MCF 10A (cell line): ENCODE measurements at regions of chr19 and their contacts with region 1.

Region 1: GRCh38 chr19:15379083-15379995 is at the start of gene AKAP8:
- DNase-seq: peak; percentile 99
- H3K4me3 Mint-ChIP-seq: peak within 1 kb of the TSS; percentile 97
- H3K27ac Mint-ChIP-seq: peak within 1 kb of the TSS; percentile 94
- H3K4me1 Mint-ChIP-seq: peaks cover 21% of the 10 kb centered on the region
- H3K27me3 Mint-ChIP-seq: no peaks in the 10 kb centered on the region
- CTCF ChIP-seq: no peak
- total RNA-seq, gene AKAP8: 31.1 and 37.8 TPM in 2 replicates

Region 2: DNA sequence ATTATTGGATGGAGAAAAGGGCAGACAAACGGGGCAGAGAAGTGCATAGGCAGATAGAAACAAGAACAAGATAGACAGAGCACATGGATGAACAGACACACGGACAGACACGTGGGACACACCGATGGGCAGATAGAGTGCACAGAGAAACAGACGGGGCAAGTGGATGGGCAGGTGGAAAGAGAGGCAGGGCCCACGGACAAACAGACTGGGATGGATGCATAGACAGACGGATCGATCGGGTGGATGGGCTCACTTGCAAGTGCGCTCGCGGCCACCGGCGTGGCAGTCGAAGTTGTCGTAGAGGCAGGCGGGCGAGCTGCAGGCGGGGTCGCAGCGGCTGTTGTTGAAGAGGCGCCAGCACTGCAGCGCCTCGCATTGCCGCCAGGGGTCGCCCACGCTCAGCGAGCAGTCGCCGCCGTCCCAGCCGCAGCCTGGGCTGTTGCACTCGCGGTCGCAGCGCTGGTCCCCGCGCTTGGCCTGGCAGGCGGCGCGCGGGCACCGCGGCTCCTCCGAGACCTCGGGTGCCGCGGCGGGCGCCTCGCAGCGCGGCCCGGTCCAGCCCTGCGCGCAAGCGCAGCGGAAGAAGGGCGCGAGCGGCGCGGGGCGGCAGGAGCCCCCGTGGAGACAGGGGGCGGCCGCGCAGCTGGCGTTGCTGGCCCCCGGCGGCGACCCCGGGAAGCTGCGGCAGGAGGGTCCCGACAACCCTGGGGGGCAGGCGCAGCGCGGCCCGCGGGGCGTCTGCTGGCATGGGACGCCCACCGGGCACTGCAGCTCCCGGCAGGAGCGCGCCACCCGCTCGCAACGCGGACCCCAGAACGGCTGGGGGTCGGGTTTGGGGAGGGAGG is 201.8 kb before region 1 on chr19:
- CTCF ChIA-PET with region 1: interaction called, 5 read pairs
- POLR2A ChIA-PET with region 1: interaction called, 4 read pairs
- intact Hi-C with region 1: loop called (anchors 5 kb)
- DNase-seq: peak; percentile 76
- H3K4me3 Mint-ChIP-seq: peak overlapping the region; percentile 25
- H3K27ac Mint-ChIP-seq: no peak overlapping the region
- H3K4me1 Mint-ChIP-seq: peaks cover 7% of the 10 kb centered on the region
- H3K27me3 Mint-ChIP-seq: no peaks in the 10 kb centered on the region
- CTCF ChIP-seq: peak; percentile 92

Region 3: GRCh38 chr19:15280915-15281683 is 98.2 kb before region 1 on chr19:
- CTCF ChIA-PET with region 1: interaction called, 5 read pairs
- POLR2A ChIA-PET with region 1: interaction called, 40 read pairs
- intact Hi-C with region 1: no loop called
- DNase-seq: peak; percentile 91
- H3K4me3 Mint-ChIP-seq: peak overlapping the region; percentile 17
- H3K27ac Mint-ChIP-seq: peak overlapping the region; percentile 63
- H3K4me1 Mint-ChIP-seq: peaks cover 57% of the 10 kb centered on the region
- H3K27me3 Mint-ChIP-seq: no peaks in the 10 kb centered on the region
- CTCF ChIP-seq: no peak

Region 4: GRCh38 chr19:15393963-15394362 is 14.6 kb after region 1 on chr19:
- CTCF ChIA-PET with region 1: no interaction called
- POLR2A ChIA-PET with region 1: interaction called, 13 read pairs
- intact Hi-C with region 1: no loop called
- DNase-seq: peak; percentile 41
- H3K4me3 Mint-ChIP-seq: no peak overlapping the region
- H3K27ac Mint-ChIP-seq: no peak overlapping the region
- H3K4me1 Mint-ChIP-seq: peaks cover 5% of the 10 kb centered on the region
- H3K27me3 Mint-ChIP-seq: no peaks in the 10 kb centered on the region
- CTCF ChIP-seq: no peak

Region 5: DNA sequence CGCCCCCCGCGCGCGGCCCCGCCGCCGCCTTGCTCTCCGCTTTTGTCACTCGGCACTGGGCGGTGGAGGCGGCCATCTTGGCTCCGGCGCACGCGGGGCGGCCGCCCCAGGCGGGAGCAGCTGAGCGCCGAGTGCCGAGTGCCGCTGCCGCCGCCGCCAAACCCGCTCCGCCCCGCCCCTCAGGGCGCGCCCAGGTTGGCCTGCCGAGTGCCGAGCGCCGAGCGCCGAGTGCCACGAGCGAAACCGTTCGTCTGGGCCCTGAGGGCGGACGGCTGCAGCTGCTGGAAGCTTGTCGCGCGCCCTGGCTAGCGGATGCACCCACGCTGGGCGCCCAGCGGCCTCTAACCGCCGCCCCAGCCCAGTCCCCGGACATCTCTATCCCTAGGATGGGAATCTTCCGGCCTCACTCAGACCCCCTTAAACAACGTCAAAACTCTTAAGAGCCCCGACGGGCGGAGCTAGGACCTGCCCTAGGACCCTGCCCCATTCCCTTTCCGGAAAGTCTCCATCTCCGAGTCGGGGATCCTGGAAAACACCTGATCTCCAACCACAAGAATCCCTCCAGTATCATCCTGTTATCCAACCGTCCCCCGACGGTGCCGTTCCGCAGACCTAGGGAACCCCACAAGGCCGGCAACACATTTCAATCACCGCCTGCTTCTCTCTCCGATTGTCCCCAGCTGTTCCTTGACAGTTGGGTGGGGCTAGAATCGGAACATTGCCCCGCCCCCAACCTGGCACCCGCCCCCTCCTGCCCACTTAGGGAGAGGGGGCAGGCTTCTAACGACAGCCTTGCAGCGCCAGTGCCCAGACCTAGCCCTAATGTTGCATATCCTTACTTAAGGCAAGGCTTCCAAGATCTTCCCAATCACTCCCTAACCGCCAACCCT is 53.5 kb after region 1 on chr19:
- CTCF ChIA-PET with region 1: no interaction called
- POLR2A ChIA-PET with region 1: interaction called, 18 read pairs
- intact Hi-C with region 1: no loop called
- DNase-seq: peak; percentile 85
- H3K4me3 Mint-ChIP-seq: peak overlapping the region; percentile 95
- H3K27ac Mint-ChIP-seq: peak overlapping the region; percentile 81
- H3K4me1 Mint-ChIP-seq: peaks cover 20% of the 10 kb centered on the region
- H3K27me3 Mint-ChIP-seq: no peaks in the 10 kb centered on the region
- CTCF ChIP-seq: no peak